Activated CD4-positive, alpha-beta T cell treated with anti-CD3 and anti-CD28 coated beads, Interleukin-2, amount 10 ng/mL, durations not matched to agents 24 days and 14 days (primary cell): ENCODE measurements at regions of chr9 and their contacts with region 1.

Region 1: GRCh38 chr9:21326526-21327139 is 8.6 kb downstream of the KLHL9 start:
- DNase-seq: no peak
- H3K4me3 Mint-ChIP-seq: no peak overlapping the region
- H3K27ac Mint-ChIP-seq: no peak overlapping the region
- H3K4me1 Mint-ChIP-seq: peaks cover 24% of the 10 kb centered on the region
- H3K27me3 Mint-ChIP-seq: no peaks in the 10 kb centered on the region

Region 2: GRCh38 chr9:21210311-21210710 is 116.3 kb before region 1 on chr9:
- intact Hi-C with region 1: loop called (anchors 10 kb)
- DNase-seq: no peak
- H3K4me3 Mint-ChIP-seq: no peak overlapping the region
- H3K27ac Mint-ChIP-seq: no peak overlapping the region
- H3K4me1 Mint-ChIP-seq: peaks cover 3% of the 10 kb centered on the region
- H3K27me3 Mint-ChIP-seq: peaks cover 17% of the 10 kb centered on the region

Region 3: DNA sequence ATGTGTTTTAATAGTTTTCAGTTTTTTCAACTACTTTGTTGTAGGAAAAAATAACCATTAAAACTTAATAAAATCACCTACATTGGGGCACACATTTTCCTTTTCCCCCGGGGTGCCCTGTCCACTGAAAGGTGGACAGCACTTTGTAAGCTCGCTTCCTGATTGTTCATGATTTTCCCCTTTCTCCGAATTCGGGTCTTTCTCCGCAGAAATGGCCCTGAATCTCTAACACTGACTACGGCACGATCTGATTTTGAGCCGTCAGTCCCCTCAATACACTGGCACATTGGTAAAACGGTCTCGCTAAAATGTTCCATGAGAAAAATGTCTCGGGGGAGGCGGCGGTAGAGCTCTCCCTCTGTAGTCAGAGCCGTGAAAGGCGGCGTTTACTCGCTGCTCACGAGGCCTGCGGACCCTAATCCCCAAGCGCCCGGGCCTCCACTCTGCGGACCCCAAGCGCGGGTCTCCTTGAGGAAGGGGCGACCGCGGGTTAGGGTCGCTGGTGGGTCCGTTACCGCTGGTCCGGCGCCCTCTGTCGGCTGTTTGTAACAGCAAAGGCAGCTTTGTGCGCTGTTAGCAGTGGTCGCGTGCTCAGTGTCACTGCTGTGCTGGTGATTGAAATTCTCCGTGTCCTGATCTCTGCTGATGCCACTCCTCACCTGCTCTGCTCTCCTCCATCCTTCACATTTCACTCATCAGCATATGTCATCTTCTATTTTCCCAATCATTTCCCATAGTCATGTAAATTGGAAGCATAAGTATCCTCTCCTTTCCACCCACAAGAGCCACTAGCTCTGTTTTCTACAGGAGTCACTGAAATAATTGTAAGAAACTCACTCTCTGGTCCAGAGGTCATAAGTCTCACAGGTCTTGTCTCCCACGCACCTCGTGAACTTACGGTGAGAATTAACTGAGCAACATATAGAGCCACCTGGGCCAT is 69.4 kb after region 1 on chr9:
- intact Hi-C with region 1: loop called (anchors 1 kb)
- DNase-seq: peak; percentile 86
- H3K4me3 Mint-ChIP-seq: peak overlapping the region; percentile 45
- H3K27ac Mint-ChIP-seq: no peak overlapping the region
- H3K4me1 Mint-ChIP-seq: peaks cover 4% of the 10 kb centered on the region
- H3K27me3 Mint-ChIP-seq: peaks cover 74% of the 10 kb centered on the region

Region 4: GRCh38 chr9:21455320-21455719 is 128.7 kb after region 1 on chr9:
- intact Hi-C with region 1: loop called (anchors 2 kb)
- DNase-seq: peak; percentile 70
- H3K4me3 Mint-ChIP-seq: no peak overlapping the region
- H3K27ac Mint-ChIP-seq: no peak overlapping the region
- H3K4me1 Mint-ChIP-seq: no peaks in the 10 kb centered on the region
- H3K27me3 Mint-ChIP-seq: peaks cover 35% of the 10 kb centered on the region

Region 5: DNA sequence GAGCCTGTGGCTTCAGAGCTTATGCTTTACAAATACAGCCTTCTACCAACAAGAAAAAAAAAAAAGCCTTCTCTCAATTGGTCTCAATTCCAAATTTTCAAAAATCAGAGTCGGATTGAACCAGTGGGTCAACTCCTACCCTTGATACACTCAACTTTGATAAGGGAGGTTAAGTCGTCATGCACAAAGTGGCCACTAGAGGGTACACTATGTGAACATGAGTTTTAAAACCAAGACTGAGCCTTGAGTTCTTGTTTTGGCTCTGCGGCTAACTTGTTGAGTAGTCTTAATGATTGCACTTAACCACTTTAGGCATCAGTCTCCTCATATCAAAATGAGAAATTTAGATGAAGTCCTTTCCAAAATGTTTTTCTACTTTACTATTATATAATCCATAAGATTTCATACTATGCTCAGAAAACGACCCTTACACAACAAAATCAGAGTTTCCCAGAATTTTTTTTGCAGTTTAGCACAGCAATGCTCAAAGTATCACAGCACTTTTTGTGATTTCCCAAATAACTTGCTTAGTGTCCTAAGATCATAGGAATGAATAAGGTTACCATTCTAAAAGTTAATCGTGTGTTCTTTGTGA is 382.9 kb after region 1 on chr9:
- intact Hi-C with region 1: loop called (anchors 10 kb)
- DNase-seq: peak; percentile 89
- H3K4me3 Mint-ChIP-seq: no peak overlapping the region
- H3K27ac Mint-ChIP-seq: no peak overlapping the region
- H3K4me1 Mint-ChIP-seq: peaks cover 13% of the 10 kb centered on the region
- H3K27me3 Mint-ChIP-seq: peaks cover 35% of the 10 kb centered on the region